Activated B cell treated with CpG ODN at 0.5 μM for 24 hours (primary cell): ENCODE measurements at regions of chr7 and their contacts with region 1.

Region 1: DNA sequence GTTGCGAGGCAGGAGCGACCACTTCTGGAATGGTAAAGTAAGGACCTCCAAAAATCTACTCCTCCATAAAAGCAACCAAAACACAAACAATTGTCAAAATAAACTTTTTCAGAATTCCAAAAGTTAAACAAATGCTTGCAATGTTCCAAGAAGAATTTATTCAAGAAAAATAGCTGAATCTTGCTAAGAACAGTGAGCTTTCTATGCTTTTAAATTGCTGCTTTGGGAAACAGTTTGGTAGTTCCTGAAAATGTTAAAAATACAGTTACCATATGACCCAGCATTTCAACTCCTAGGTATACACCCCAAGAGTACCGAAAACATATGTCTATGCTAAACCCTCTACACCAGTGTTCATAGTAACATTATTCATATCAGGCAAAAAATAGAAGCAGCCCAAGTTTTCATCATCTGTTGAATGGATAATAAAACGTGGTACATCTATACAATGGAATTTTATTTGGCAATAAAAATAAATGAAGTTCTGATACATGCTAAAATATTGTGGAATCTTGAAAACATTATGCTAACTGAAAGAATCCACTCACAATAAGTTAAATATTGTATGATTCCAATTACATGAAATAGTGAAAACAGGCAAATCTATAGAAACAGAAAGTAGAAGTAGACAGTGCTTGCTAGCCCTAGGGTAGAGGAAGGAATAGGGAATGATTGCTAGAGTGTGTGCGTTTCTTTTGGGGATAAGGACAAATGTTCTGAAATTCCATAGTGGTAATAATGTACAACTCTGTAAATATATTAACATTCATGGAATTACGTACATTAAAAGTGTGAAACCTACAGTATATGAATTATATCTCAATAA is 57.0 kb downstream of the LRRN3 start:
- DNase-seq: no peak
- ATAC-seq: no peak
- H3K4me3 Mint-ChIP-seq: no peak overlapping the region
- H3K27ac Mint-ChIP-seq: no peak overlapping the region
- H3K4me1 Mint-ChIP-seq: no peaks in the 10 kb centered on the region
- H3K27me3 Mint-ChIP-seq: no peaks in the 10 kb centered on the region
- CTCF ChIP-seq: no peak

Region 2: DNA sequence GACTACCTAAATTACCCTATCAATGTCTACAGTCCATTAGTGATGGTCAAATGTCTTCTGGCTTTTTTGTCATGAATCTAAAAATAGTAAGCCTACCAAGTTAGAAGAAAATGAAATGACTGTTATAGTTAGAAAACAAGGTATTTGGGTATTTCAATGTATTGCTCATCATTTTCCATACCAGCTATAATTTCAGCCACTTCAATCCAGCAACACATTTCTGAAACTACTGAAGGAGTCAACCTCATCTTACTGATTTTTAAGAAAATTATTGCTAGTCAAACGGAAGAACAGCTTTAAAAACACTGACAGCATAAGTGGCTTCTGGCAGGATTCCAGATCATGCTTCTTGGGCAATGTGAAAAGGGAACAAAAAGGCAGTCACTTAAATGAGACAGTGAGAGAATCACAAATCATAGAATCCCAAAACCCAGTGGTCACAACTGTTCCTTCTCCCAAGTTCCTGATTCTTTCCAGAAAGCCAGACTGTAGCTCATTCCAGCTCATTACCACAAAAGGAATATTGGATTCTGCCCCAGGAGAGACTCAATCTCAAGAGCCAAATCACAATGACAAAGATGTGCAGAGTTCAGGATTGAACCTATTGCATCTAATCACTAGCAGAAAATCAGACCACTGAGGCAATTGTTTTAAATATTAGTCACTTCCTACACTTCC is 118.2 kb before region 1 on chr7:
- CTCF ChIA-PET with region 1: no interaction called
- POLR2A ChIA-PET with region 1: no interaction called
- intact Hi-C with region 1: no loop called
- DNase-seq: no peak
- ATAC-seq: no peak
- H3K4me3 Mint-ChIP-seq: no peak overlapping the region
- H3K27ac Mint-ChIP-seq: no peak overlapping the region
- H3K4me1 Mint-ChIP-seq: peaks cover 8% of the 10 kb centered on the region
- H3K27me3 Mint-ChIP-seq: no peaks in the 10 kb centered on the region
- CTCF ChIP-seq: no peak

Region 3: GRCh38 chr7:111159426-111159825 is 11.5 kb after region 1 on chr7:
- CTCF ChIA-PET with region 1: no interaction called
- POLR2A ChIA-PET with region 1: no interaction called
- intact Hi-C with region 1: loop called (anchors 1 kb)
- DNase-seq: no peak
- ATAC-seq: no peak
- H3K4me3 Mint-ChIP-seq: no peak overlapping the region
- H3K27ac Mint-ChIP-seq: no peak overlapping the region
- H3K4me1 Mint-ChIP-seq: no peaks in the 10 kb centered on the region
- H3K27me3 Mint-ChIP-seq: no peaks in the 10 kb centered on the region
- CTCF ChIP-seq: no peak